Gastrocnemius medialis (tissue), 4 donors: ENCODE measurements at regions of chr3 and their contacts with region 1.

Region 1: DNA sequence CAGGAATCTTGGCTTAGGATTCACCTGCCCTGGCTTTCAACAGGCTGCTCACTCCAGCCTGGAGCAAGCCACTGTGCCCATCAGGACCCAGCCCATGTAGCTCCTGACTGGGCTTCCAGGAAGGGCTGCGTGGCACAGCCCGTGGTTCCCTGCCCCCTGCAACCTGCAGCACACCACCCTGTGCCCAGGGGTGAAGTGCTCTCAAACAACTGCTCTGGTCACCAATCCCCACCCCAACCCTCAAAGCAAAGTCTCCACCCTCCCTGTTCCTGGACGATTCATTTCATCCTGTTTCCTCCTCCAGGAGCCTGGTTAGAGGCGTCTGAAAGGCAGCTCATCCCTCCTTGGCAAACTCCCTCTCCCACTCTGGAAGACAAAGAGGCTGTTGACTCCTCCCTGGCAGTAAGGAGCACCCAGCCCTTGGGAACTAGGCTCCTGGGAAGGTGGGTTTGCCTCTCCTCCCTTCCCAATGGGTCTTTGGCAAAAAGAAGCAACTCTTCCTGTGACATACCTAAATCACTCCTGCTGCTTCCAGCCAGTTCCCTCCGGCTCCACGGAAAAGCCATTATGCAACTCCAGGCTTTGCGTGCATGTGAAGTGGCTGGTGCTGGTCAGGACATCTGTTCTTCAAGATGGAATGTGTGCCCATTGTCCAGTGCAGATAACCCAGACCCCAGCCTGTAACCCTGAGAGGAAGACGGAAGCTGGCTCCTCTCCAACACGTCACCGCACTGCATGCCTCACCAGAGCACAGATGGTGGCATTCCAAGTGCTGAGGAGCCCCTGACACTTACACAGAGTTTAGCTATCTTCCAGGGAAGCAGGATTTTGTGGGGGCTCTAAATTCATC is 29.1 kb upstream of the VIPR1 start:
- DNase-seq: no peak
- ATAC-seq: no peak
- H3K4me3 ChIP-seq: no peak overlapping the region
- H3K27ac ChIP-seq: no peak overlapping the region
- H3K4me1 ChIP-seq: no peaks in the 10 kb centered on the region
- H3K27me3 ChIP-seq: no peaks in the 10 kb centered on the region
- CTCF ChIP-seq: no peak
- POLR2A ChIP-seq: no peak

Region 2: GRCh38 chr3:41900265-41900664 is 573.0 kb before region 1 on chr3:
- in situ Hi-C with region 1: loop called in 1 of 4 experiments (anchors 25 kb)
- intact Hi-C with region 1: no loop called
- DNase-seq: no peak
- ATAC-seq: no peak
- H3K4me3 ChIP-seq: no peak overlapping the region
- H3K27ac ChIP-seq: no peak overlapping the region
- H3K4me1 ChIP-seq: no peaks in the 10 kb centered on the region
- H3K27me3 ChIP-seq: no peaks in the 10 kb centered on the region
- CTCF ChIP-seq: no peak
- POLR2A ChIP-seq: no peak

Region 3: DNA sequence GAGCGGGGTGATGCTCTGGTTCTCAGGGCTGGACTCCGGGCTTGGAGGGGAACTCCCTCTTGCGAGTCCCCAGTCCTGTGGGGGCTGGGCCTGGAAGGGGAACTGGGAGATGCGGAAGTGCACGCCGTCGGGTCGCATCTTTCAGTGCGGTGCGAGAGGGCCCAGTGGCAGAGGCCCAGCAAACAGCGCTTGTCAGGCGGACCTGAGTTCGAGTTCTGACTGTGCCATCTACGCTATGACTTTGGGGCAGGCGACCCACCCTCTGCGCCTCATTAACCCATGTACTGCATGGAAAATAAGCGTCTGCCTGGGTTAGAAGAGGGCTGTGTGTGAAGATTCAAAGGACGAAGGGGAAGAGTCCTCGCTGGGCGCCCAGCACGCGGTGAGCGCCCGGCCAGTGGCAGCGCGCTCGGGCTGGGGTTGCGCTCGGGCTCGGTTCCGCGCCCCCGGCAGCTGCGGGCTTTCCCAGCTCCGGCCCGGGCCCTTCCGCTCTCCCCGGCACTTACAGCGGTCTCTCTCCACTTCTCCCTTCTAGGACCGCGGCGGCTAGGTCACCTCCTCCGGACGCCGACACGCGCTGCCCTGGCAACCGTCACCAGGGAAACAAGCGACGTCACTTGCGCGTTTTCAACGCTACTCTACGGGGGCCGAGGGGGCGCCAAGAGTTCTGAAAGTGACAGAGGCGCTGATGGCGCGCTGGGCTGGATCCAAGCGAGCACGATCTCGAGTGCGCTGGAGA is 299.5 kb after region 1 on chr3 and contains the start of gene CCDC13:
- in situ Hi-C with region 1: no loop called
- intact Hi-C with region 1: no loop called
- DNase-seq: peak; percentile 88 to 89
- ATAC-seq: peak; percentile 89 to 91
- H3K4me3 ChIP-seq: peak within 1 kb of the TSS; percentile 53 to 73 (median 58)
- H3K27ac ChIP-seq: peak within 1 kb of the TSS; percentile 27 to 69 (median 30)
- H3K4me1 ChIP-seq: peaks cover 5% of the 10 kb centered on the region in 2 donors
- H3K27me3 ChIP-seq: no peaks in the 10 kb centered on the region
- CTCF ChIP-seq: no peak
- POLR2A ChIP-seq: peak in 1 of 2 donors; percentile 32
- total RNA-seq, gene CCDC13: 0.12 to 1.5 (median 1.1) TPM